ENCODE measurements at regions of chr17 and their contacts with region 1.

Region 1: DNA sequence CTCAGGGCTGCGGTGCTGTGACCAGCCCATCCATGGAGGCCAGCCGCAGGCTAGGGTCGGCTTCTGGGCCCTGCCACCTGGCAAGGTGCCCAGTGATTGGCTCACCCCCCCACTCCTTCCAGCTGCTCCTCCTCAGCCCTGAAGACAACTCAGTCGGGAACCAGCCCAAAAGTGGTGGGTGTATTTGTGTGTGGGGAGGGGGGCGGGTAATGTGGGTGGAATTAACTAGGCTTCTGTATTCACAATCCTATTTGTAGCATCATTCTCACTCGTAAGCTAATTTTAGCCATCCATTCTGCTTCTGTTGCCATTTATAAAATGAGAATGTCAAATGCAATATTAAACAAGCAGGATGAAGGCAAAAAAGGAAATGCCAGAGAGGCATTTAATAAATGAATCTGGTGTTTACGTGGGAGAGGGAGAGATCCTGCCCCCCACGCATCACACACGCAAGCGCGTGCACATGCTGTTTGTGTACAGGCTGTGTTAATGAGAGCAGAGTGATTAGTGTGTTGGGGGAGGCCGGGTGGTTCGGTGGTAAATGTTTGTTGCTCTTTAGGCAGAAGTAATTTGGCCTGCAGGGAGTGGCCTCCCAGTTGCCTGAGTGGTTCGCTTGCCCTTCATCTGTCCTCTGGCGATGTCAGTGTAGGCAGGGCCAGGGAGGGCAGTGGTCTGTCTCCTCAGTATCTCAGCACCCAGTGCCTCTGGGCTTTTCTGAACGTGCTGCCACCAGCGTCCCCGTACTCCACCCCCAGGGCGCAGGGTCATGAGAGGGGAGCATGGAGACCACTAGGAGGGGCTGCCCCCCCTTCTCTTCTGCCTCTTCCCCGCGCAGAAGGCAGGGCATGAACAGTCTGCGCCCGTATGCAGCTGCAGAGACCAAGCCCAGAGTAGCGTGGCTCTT is 140.1 kb downstream of the CCDC182 start:
- DNase-seq: no peak
- ATAC-seq: no peak
- H3K4me3 ChIP-seq: no peak overlapping the region
- H3K27ac ChIP-seq: no peak overlapping the region
- H3K4me1 ChIP-seq: peaks cover 41% of the 10 kb centered on the region
- H3K27me3 ChIP-seq: no peaks in the 10 kb centered on the region
- CTCF ChIP-seq: no peak
- EP300 ChIP-seq: no peak
- POLR2A ChIP-seq: no peak
- RAD21 ChIP-seq: no peak

Region 2: DNA sequence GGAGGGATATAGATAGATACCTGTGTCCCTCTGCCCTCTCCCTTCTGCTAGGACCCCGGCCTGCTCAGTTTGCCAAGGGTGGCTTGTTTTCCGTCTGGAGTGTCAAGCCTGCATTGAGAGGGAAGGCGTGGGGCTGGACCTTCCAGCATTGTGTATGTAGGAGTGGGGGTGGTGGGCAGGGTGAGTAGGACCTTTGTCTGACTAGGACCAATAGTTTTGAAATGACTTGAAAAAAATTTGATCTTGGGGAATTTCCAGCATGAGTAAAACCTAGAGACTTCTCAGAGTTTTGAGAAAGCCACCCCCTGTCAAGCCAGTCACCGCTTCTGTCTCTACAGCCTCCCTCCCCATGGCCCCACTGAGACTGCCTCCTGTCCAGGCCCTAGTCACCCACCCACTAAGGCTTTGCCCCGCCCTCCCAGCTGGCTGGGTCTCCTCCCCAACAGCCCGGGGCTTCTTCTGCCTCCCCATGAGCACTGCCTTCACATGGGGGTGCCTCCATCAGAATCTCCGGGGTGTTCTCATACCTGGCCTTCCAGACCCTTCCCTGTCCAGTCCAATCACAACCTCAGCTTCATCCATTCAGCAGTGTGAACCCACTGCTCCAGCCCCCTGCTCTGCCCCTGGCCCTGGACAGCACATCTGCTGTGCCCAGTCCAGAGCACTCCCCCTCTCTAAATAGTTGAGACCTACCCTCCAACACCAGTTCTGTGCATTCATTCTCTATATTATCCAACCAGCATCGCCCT is 141.7 kb before region 1 on chr17:
- CTCF ChIA-PET with region 1: no interaction called
- POLR2A ChIA-PET with region 1: no interaction called
- in situ Hi-C with region 1: no loop called
- intact Hi-C with region 1: loop called (anchors 1 kb)
- DNase-seq: peak; percentile 30
- ATAC-seq: no peak
- H3K4me3 ChIP-seq: no peak overlapping the region
- H3K27ac ChIP-seq: no peak overlapping the region
- H3K4me1 ChIP-seq: peaks cover 74% of the 10 kb centered on the region
- H3K27me3 ChIP-seq: no peaks in the 10 kb centered on the region
- CTCF ChIP-seq: no peak
- EP300 ChIP-seq: no peak
- POLR2A ChIP-seq: no peak
- RAD21 ChIP-seq: no peak

Region 3: GRCh38 chr17:57569853-57570252 is 35.2 kb before region 1 on chr17:
- CTCF ChIA-PET with region 1: no interaction called
- POLR2A ChIA-PET with region 1: no interaction called
- in situ Hi-C with region 1: no loop called
- intact Hi-C with region 1: loop called (anchors 2 kb)
- DNase-seq: no peak
- ATAC-seq: no peak
- H3K4me3 ChIP-seq: no peak overlapping the region
- H3K27ac ChIP-seq: no peak overlapping the region
- H3K4me1 ChIP-seq: peaks cover 11% of the 10 kb centered on the region
- H3K27me3 ChIP-seq: no peaks in the 10 kb centered on the region
- CTCF ChIP-seq: no peak
- EP300 ChIP-seq: no peak
- POLR2A ChIP-seq: no peak
- RAD21 ChIP-seq: no peak

Region 4: GRCh38 chr17:57747221-57748017 is 142.4 kb after region 1 on chr17:
- CTCF ChIA-PET with region 1: no interaction called
- POLR2A ChIA-PET with region 1: no interaction called
- in situ Hi-C with region 1: no loop called
- intact Hi-C with region 1: loop called (anchors 5 kb)
- DNase-seq: peak; percentile 54
- ATAC-seq: peak; percentile 58
- H3K4me3 ChIP-seq: no peak overlapping the region
- H3K27ac ChIP-seq: no peak overlapping the region
- H3K4me1 ChIP-seq: peaks cover 26% of the 10 kb centered on the region
- H3K27me3 ChIP-seq: peaks cover 0 to 43% of the 10 kb centered on the region in 2 experiments; a peak in 3 of 5 replicates
- CTCF ChIP-seq: peak; percentile 89
- EP300 ChIP-seq: no peak
- POLR2A ChIP-seq: no peak
- RAD21 ChIP-seq: peak; percentile 49; the same call in 1 of the 2 replicates

Measured in HepG2 (cell line).